ENCODE measurements at regions of chr3 and their contacts with region 1.

Region 1: GRCh38 chr3:132641837-132642538 is 17.6 kb downstream of the ACAD11 start:
- DNase-seq: peak; percentile 37 to 38
- ATAC-seq: peak; percentile 50 to 68; a peak in 5 of 6 replicates
- H3K4me3 ChIP-seq: no peak overlapping the region
- H3K27ac ChIP-seq: no peak overlapping the region
- H3K4me1 ChIP-seq: peaks cover 26% of the 10 kb centered on the region
- CTCF ChIP-seq: peak; percentile 74
- EP300 ChIP-seq: no peak
- POLR2A ChIP-seq: no peak
- RAD21 ChIP-seq: peak; percentile 64 to 66

Region 2: DNA sequence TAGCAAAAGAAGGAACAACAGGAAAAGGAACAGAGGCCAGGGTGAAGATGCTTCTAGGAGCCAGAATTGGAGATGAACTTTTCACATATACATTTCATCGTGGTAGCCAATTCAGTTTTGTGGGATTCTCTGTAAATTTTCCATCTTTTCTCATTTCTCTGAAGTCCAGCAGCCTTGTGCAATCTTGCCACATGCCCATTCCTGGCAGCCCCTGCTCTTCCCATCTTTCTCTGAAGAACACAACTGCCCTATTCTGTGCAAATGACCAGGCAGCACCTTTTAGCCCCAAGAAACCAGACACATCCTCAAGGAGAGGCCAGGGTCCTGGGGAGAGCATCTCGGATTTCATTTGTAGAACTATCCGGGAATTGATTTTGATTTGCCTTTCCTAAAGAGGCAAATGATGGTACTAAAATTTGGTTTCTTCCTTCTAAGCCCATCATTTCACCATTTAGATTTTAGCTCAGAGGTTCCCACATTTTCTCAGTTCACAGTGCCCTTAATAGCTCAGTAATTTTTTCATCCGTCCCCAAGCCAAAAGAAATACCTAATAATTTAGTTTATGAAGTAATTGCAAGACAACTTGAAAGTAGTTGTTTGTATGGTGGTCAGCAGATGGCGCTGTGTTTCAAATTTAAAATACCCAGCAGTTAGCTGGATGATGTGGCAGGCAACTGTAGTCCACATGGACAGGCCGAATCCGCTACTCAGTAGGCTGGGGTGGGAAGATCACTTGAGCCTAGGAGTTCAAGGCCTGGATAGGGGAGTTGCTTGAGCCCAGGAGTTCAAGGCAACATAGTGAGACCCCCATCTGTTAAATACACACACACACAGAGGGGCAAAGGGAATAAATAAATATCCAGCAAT is 106.2 kb before region 1 on chr3:
- CTCF ChIA-PET with region 1: interaction called, 16 read pairs
- POLR2A ChIA-PET with region 1: no interaction called
- DNase-seq: peak; percentile 15 to 67
- ATAC-seq: peak; percentile 66 to 84; a peak in 4 of 6 replicates
- H3K4me3 ChIP-seq: no peak overlapping the region
- H3K27ac ChIP-seq: no peak overlapping the region
- H3K4me1 ChIP-seq: no peaks in the 10 kb centered on the region
- CTCF ChIP-seq: peak; percentile 48
- EP300 ChIP-seq: no peak
- POLR2A ChIP-seq: no peak
- RAD21 ChIP-seq: peak; percentile 40 to 50

Region 3: GRCh38 chr3:132997404-132998185 is 355.6 kb after region 1 on chr3:
- CTCF ChIA-PET with region 1: no interaction called
- POLR2A ChIA-PET with region 1: no interaction called
- DNase-seq: no peak
- ATAC-seq: no peak
- H3K4me3 ChIP-seq: no peak overlapping the region
- H3K27ac ChIP-seq: no peak overlapping the region
- H3K4me1 ChIP-seq: no peaks in the 10 kb centered on the region
- CTCF ChIP-seq: no peak
- EP300 ChIP-seq: no peak
- POLR2A ChIP-seq: no peak
- RAD21 ChIP-seq: no peak

Measured in A549 (cell line).